ENCODE measurements at regions of chr1 and their contacts with region 1.

Region 1: GRCh38 chr1:10378081-10378841 is 20.6 kb upstream of the PGD start:
- DNase-seq: peak in 2 of 4 donors; percentile 64 to 90
- ATAC-seq: peak; percentile 64
- H3K4me3 ChIP-seq: no peak overlapping the region
- H3K27ac ChIP-seq: peak overlapping the region; percentile 36 to 81
- H3K4me1 ChIP-seq: peaks cover 0 to 9% of the 10 kb centered on the region in 2 donors
- H3K27me3 ChIP-seq: no peaks in the 10 kb centered on the region
- CTCF ChIP-seq: no peak

Region 2: GRCh38 chr1:10108134-10108663 is 270.1 kb before region 1 on chr1:
- intact Hi-C with region 1: no loop called
- DNase-seq: no peak
- ATAC-seq: peak; percentile 91
- H3K4me3 ChIP-seq: no peak overlapping the region
- H3K27ac ChIP-seq: peak overlapping the region in 1 of 2 donors; percentile 65
- H3K4me1 ChIP-seq: peaks cover 7 to 12% of the 10 kb centered on the region in 2 donors
- H3K27me3 ChIP-seq: no peaks in the 10 kb centered on the region
- CTCF ChIP-seq: no peak

Region 3: GRCh38 chr1:10424034-10424433 is 45.8 kb after region 1 on chr1:
- intact Hi-C with region 1: loop called in 1 of 2 experiments (anchors 5 kb)
- DNase-seq: peak in 2 of 4 donors; percentile 24 to 72
- ATAC-seq: no peak
- H3K4me3 ChIP-seq: no peak overlapping the region
- H3K27ac ChIP-seq: no peak overlapping the region
- H3K4me1 ChIP-seq: no peaks in the 10 kb centered on the region
- H3K27me3 ChIP-seq: no peaks in the 10 kb centered on the region
- CTCF ChIP-seq: no peak